IMR-90 (cell line): ENCODE measurements at regions of chr5 and their contacts with region 1.

Region 1: DNA sequence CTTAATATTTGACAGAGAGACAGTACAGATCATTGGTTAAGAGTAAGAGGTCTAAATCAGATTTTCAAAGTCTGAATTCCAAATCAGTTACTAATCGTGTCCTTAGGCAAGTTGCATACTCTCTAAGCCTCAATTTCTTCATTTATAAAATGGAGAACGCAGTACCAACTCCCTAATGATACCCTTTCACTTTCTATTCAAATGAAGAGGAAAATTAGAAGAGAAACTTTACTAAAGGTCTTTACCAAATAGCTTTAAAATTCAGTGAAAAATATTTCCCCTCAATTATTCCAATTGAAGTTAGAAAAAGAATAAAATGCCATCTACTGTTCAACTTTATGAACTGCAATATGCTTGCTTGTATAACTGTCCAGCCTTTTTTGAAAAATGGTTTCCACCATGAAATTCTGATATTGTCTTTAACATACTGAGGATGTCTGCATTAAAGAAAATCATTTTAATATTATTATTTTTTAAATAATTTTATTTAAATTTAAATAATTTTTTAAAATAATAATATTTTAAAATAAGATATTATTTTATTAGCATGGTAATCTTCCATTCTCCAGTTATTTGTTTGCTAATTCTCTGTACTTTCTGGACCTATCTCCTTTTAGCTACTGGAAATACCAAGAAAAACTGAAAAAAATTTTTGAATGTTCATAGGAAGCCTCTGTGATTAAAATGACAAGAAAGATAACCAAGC is 36.0 kb downstream of the POC5 start:
- DNase-seq: peak; percentile 60
- ATAC-seq: peak; percentile 59
- H3K4me3 ChIP-seq: no peak overlapping the region
- H3K27ac ChIP-seq: no peak overlapping the region
- H3K4me1 ChIP-seq: peaks cover 3% of the 10 kb centered on the region
- H3K27me3 ChIP-seq: no peaks in the 10 kb centered on the region
- CTCF ChIP-seq: peak; percentile 66
- POLR2A ChIP-seq: no peak
- RAD21 ChIP-seq: peak; percentile 56

Region 2: GRCh38 chr5:75236322-75237316 is 444.7 kb before region 1 on chr5 and contains the start of gene ANKRD31:
- CTCF ChIA-PET with region 1: no interaction called
- POLR2A ChIA-PET with region 1: no interaction called
- dilution Hi-C with region 1: no loop called
- in situ Hi-C with region 1: no loop called
- intact Hi-C with region 1: loop called (anchors 5 kb)
- DNase-seq: peak; percentile 66
- ATAC-seq: peak; percentile 100
- H3K4me3 ChIP-seq: peak within 1 kb of the TSS; percentile 87
- H3K27ac ChIP-seq: peak within 1 kb of the TSS; percentile 52
- H3K4me1 ChIP-seq: peaks cover 3% of the 10 kb centered on the region
- H3K27me3 ChIP-seq: no peaks in the 10 kb centered on the region
- CTCF ChIP-seq: peak; percentile 83
- POLR2A ChIP-seq: peak; percentile 46; the same call in 1 of the 2 replicates
- RAD21 ChIP-seq: peak; percentile 76
- total RNA-seq, gene ANKRD31: under 0.01 TPM in 2 replicates

Region 3: GRCh38 chr5:75363726-75364495 is 317.4 kb before region 1 on chr5:
- CTCF ChIA-PET with region 1: interaction called, 5 read pairs
- POLR2A ChIA-PET with region 1: no interaction called
- dilution Hi-C with region 1: no loop called
- in situ Hi-C with region 1: no loop called
- intact Hi-C with region 1: loop called (anchors 10 kb)
- DNase-seq: no peak
- ATAC-seq: no peak
- H3K4me3 ChIP-seq: no peak overlapping the region
- H3K27ac ChIP-seq: no peak overlapping the region
- H3K4me1 ChIP-seq: peaks cover 5% of the 10 kb centered on the region
- H3K27me3 ChIP-seq: no peaks in the 10 kb centered on the region
- CTCF ChIP-seq: no peak
- POLR2A ChIP-seq: no peak
- RAD21 ChIP-seq: no peak

Region 4: DNA sequence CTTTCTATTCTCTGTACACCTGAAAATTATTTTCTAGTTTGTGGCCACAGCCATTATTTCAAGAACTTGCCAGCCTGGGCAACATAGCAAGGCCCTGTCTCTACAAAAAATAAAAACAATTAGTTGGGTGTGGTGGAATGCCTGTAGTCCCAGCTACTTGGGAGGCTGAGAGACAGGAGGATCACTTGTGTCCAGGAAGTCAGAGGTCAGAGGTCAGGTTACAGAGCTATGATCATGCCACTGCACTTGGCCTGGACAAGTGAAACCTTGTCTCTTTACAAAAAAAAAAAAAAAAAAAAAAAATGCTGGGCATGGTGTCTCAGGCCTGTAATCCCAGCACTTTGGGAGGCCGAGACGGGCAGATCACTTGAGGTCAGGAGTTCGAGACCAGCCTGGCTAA is 286.0 kb before region 1 on chr5:
- CTCF ChIA-PET with region 1: no interaction called
- POLR2A ChIA-PET with region 1: no interaction called
- dilution Hi-C with region 1: no loop called
- in situ Hi-C with region 1: loop called (anchors 25 kb)
- intact Hi-C with region 1: no loop called
- DNase-seq: no peak
- ATAC-seq: no peak
- H3K4me3 ChIP-seq: no peak overlapping the region
- H3K27ac ChIP-seq: no peak overlapping the region
- H3K4me1 ChIP-seq: no peaks in the 10 kb centered on the region
- H3K27me3 ChIP-seq: no peaks in the 10 kb centered on the region
- CTCF ChIP-seq: no peak
- POLR2A ChIP-seq: no peak
- RAD21 ChIP-seq: no peak

Region 5: GRCh38 chr5:75511435-75512384 is 169.6 kb before region 1 on chr5 and contains the starts of genes CERT1 and POLK:
- CTCF ChIA-PET with region 1: interaction called, 3 read pairs
- POLR2A ChIA-PET with region 1: no interaction called
- dilution Hi-C with region 1: no loop called
- in situ Hi-C with region 1: no loop called
- intact Hi-C with region 1: loop called (anchors 2 kb)
- DNase-seq: peak; percentile 98
- ATAC-seq: peak; percentile 97
- H3K4me3 ChIP-seq: peak within 1 kb of the TSS; percentile 88
- H3K27ac ChIP-seq: peak within 1 kb of the TSS; percentile 96
- H3K4me1 ChIP-seq: no peaks in the 10 kb centered on the region
- H3K27me3 ChIP-seq: no peaks in the 10 kb centered on the region
- CTCF ChIP-seq: no peak
- POLR2A ChIP-seq: peak; percentile 89
- RAD21 ChIP-seq: no peak
- total RNA-seq, gene CERT1: 7.2 and 10.3 TPM in 2 replicates
- total RNA-seq, gene POLK: 24.4 and 34.2 TPM in 2 replicates

Region 6: DNA sequence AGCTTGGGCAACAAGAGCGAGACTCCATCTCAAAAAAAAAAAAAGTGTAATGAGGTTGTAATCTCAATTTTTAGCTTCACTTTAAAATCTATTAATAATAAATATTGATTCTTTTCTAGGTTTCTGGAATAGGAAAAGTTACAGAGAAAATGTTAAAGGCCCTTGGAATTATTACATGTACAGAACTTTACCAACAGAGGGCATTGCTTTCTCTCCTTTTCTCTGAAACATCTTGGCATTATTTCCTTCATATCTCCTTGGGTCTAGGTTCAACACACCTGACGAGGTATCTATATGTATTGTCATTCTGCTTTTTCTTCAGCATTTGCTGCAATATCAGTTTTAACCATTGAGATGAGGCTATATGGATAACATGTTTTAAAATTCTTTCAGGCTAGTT is 96.6 kb before region 1 on chr5:
- CTCF ChIA-PET with region 1: interaction called, 3 read pairs
- POLR2A ChIA-PET with region 1: no interaction called
- dilution Hi-C with region 1: no loop called
- in situ Hi-C with region 1: no loop called
- intact Hi-C with region 1: loop called (anchors 2 kb)
- DNase-seq: no peak
- ATAC-seq: no peak
- H3K4me3 ChIP-seq: no peak overlapping the region
- H3K27ac ChIP-seq: no peak overlapping the region
- H3K4me1 ChIP-seq: no peaks in the 10 kb centered on the region
- H3K27me3 ChIP-seq: no peaks in the 10 kb centered on the region
- CTCF ChIP-seq: peak; percentile 28
- POLR2A ChIP-seq: no peak
- RAD21 ChIP-seq: peak; percentile 29; the same call in 1 of the 2 replicates

Region 7: GRCh38 chr5:75603371-75603770 is 77.9 kb before region 1 on chr5:
- CTCF ChIA-PET with region 1: interaction called, 4 read pairs
- POLR2A ChIA-PET with region 1: no interaction called
- dilution Hi-C with region 1: no loop called
- in situ Hi-C with region 1: no loop called
- intact Hi-C with region 1: loop called (anchors 5 kb)
- DNase-seq: peak; percentile 88
- ATAC-seq: peak; percentile 53
- H3K4me3 ChIP-seq: no peak overlapping the region
- H3K27ac ChIP-seq: no peak overlapping the region
- H3K4me1 ChIP-seq: peaks cover 13% of the 10 kb centered on the region
- H3K27me3 ChIP-seq: no peaks in the 10 kb centered on the region
- CTCF ChIP-seq: no peak
- POLR2A ChIP-seq: no peak
- RAD21 ChIP-seq: no peak

Region 8: GRCh38 chr5:75717082-75717922 is 36.0 kb after region 1 on chr5 and contains the start of gene POC5:
- CTCF ChIA-PET with region 1: no interaction called
- POLR2A ChIA-PET with region 1: no interaction called
- dilution Hi-C with region 1: no loop called
- in situ Hi-C with region 1: no loop called
- intact Hi-C with region 1: no loop called
- DNase-seq: peak; percentile 93
- ATAC-seq: peak; percentile 95
- H3K4me3 ChIP-seq: peak within 1 kb of the TSS; percentile 90
- H3K27ac ChIP-seq: peak within 1 kb of the TSS; percentile 78
- H3K4me1 ChIP-seq: no peaks in the 10 kb centered on the region
- H3K27me3 ChIP-seq: no peaks in the 10 kb centered on the region
- CTCF ChIP-seq: no peak
- POLR2A ChIP-seq: no peak
- RAD21 ChIP-seq: 0 out of 2 replicates have a peak, but pooled peaks have one; percentile 6
- total RNA-seq, gene POC5: 12.9 and 13.1 TPM in 2 replicates